OCI-LY7 (cell line): ENCODE measurements at regions of chr16 and their contacts with region 1.

Region 1: GRCh38 chr16:578870-579405 is 9.2 kb downstream of the PIGQ start:
- DNase-seq: peak; percentile 77
- H3K4me3 ChIP-seq: no peak overlapping the region
- H3K27ac ChIP-seq: no peak overlapping the region
- H3K4me1 ChIP-seq: peaks cover 10% of the 10 kb centered on the region
- CTCF ChIP-seq: peak; percentile 78

Region 2: GRCh38 chr16:600781-601180 is 21.8 kb after region 1 on chr16:
- CTCF ChIA-PET with region 1: no interaction called
- POLR2A ChIA-PET with region 1: no interaction called
- intact Hi-C with region 1: loop called (anchors 1 kb)
- DNase-seq: peak; percentile 39
- H3K4me3 ChIP-seq: no peak overlapping the region
- H3K27ac ChIP-seq: no peak overlapping the region
- H3K4me1 ChIP-seq: no peaks in the 10 kb centered on the region
- CTCF ChIP-seq: peak; percentile 71

Region 3: DNA sequence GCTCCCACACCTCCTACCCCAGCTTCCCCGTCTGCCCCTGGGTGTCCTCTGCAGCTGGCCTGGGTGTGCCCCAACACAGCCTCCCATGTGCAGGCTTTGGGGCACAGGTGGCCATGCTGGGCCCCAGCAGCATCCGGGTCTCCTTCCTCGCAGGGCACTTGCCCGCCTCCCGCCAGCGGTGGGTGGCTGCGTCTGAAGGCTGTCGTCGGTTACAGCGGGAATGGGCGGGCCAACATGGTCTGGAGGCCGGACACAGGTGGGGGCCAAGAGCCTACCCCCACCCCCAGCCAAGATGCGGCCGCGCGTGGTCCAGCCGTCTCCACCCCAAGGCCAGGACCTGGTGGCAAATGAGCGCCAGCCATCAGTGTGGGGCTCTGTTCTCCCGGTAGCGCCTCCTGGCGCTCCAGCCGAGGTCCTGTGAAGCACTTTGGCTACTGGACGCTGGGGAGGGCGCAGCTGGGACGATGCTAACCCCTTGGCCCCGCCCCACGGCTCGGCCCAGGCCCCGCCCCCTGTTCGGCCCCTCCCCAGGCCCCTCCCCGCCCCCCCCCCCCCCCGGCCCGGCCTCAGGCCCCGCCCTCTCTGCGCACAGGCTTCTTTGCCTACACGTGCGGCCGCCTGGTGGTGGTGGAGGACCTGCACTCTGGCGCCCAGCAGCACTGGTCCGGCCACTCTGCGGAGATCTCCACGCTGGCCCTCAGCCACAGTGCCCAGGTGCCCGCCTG is 81.7 kb after region 1 on chr16:
- CTCF ChIA-PET with region 1: no interaction called
- POLR2A ChIA-PET with region 1: no interaction called
- intact Hi-C with region 1: loop called (anchors 1 kb)
- DNase-seq: peak; percentile 91
- H3K4me3 ChIP-seq: no peak overlapping the region
- H3K27ac ChIP-seq: no peak overlapping the region
- H3K4me1 ChIP-seq: peaks cover 6% of the 10 kb centered on the region
- CTCF ChIP-seq: peak; percentile 27

Region 4: GRCh38 chr16:711548-712320 is 132.8 kb after region 1 on chr16:
- CTCF ChIA-PET with region 1: interaction called, 12 read pairs
- POLR2A ChIA-PET with region 1: no interaction called
- intact Hi-C with region 1: no loop called
- DNase-seq: peak; percentile 82
- H3K4me3 ChIP-seq: no peak overlapping the region
- H3K27ac ChIP-seq: no peak overlapping the region
- H3K4me1 ChIP-seq: peaks cover 17% of the 10 kb centered on the region
- CTCF ChIP-seq: peak; percentile 84

Region 5: GRCh38 chr16:761987-762513 is 183.1 kb after region 1 on chr16:
- CTCF ChIA-PET with region 1: no interaction called
- POLR2A ChIA-PET with region 1: no interaction called
- intact Hi-C with region 1: no loop called
- DNase-seq: no peak
- H3K4me3 ChIP-seq: no peak overlapping the region
- H3K27ac ChIP-seq: no peak overlapping the region
- H3K4me1 ChIP-seq: no peaks in the 10 kb centered on the region
- CTCF ChIP-seq: no peak